AG04450 (cell line): ENCODE measurements at regions of chr18 and their contacts with region 1.

Region 1: DNA sequence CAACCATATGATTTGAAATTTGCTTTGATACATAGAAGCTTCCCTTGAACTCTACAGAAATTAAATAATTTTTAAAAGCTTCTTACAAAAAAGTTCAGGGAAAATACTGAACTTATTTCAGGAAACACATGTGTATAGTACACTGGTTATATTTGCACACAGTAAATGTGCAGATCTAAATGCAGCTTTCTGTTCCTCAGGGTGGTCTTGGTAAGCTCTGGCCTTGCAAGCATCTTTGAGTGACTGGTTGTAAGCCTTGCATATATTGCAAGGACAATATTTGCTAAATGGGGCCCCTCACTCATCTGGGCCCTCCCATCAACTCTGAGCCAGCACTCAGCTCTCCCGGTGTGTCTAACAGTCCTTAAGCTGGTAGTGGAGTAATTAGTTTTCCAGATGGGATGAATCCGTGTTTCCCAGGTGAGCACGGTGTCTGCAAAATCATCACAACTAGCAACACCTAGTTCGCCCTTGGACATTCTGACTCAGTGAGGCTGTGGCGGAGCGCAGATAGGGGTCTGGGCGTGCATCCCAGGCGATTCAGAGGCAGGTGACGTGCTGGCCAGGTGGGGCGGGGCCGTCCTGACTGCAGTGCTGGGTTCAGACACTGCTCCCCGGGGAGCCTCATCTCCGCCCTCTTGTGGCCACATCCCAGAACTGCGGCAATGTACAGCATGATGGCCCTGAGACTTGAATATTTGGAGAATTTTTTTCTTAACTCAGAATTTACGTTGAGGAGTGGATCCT is 149.6 kb downstream of the MBP start:
- DNase-seq: peak; percentile 32
- H3K4me3 ChIP-seq: no peak overlapping the region
- H3K27ac ChIP-seq: no peak overlapping the region
- H3K27me3 ChIP-seq: peaks cover 5% of the 10 kb centered on the region
- CTCF ChIP-seq: peak; percentile 93

Region 2: GRCh38 chr18:76643996-76644395 is 339.0 kb before region 1 on chr18:
- CTCF ChIA-PET with region 1: no interaction called
- POLR2A ChIA-PET with region 1: no interaction called
- DNase-seq: no peak
- H3K4me3 ChIP-seq: no peak overlapping the region
- H3K27ac ChIP-seq: no peak overlapping the region
- H3K27me3 ChIP-seq: peaks cover 14% of the 10 kb centered on the region
- CTCF ChIP-seq: no peak

Region 3: DNA sequence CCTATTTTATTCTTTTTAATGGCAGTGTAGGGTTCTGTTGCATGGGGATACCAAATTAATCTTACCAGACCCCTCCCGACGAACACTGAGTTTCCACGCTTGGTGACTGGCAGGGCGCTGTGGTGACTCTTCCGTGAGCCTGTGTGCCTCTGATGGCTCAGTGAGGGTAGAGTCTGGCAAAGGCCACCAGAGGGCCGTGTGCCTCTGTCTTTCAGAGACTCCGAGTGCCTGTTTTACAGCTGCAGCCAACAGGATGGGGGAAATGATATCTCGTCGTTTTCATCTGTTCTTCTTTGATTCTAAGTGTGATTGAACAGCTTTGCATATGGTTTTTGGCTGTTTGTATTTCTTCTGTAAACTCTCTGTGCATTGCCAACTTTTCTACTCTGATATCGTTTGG is 60.9 kb before region 1 on chr18:
- CTCF ChIA-PET with region 1: interaction called, 87 read pairs
- POLR2A ChIA-PET with region 1: no interaction called
- DNase-seq: peak; percentile 10
- H3K4me3 ChIP-seq: no peak overlapping the region
- H3K27ac ChIP-seq: no peak overlapping the region
- H3K27me3 ChIP-seq: no peaks in the 10 kb centered on the region
- CTCF ChIP-seq: peak; percentile 72

Region 4: DNA sequence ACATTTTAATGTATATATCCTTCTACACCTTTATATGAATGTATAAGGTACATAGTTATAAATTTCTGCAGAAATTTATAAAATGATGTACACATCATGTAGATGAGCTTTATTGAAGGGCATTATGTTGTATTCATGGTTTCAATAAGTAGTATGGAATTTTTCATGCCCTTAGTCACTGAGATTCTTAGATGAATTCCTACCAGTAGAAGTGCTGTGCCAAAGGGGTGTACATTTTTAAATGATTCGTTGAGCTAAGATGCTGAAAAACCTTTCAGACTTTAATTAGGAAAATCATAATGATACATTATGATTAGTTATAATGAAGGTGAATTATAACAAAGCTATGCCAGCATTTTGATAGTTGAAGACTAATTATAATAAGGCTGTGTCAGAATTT is 45.4 kb before region 1 on chr18:
- CTCF ChIA-PET with region 1: interaction called, 18 read pairs
- POLR2A ChIA-PET with region 1: no interaction called
- DNase-seq: no peak
- H3K4me3 ChIP-seq: no peak overlapping the region
- H3K27ac ChIP-seq: no peak overlapping the region
- H3K27me3 ChIP-seq: no peaks in the 10 kb centered on the region
- CTCF ChIP-seq: peak; percentile 46

Region 5: GRCh38 chr18:76963936-76964335 is 19.1 kb before region 1 on chr18:
- CTCF ChIA-PET with region 1: interaction called, 33 read pairs
- POLR2A ChIA-PET with region 1: no interaction called
- DNase-seq: no peak
- H3K4me3 ChIP-seq: no peak overlapping the region
- H3K27ac ChIP-seq: no peak overlapping the region
- H3K27me3 ChIP-seq: no peaks in the 10 kb centered on the region
- CTCF ChIP-seq: no peak

Region 6: GRCh38 chr18:77054606-77055428 is 71.8 kb after region 1 on chr18:
- CTCF ChIA-PET with region 1: interaction called, 15 read pairs
- POLR2A ChIA-PET with region 1: no interaction called
- DNase-seq: peak; percentile 71
- H3K4me3 ChIP-seq: no peak overlapping the region
- H3K27ac ChIP-seq: peak overlapping the region; percentile 70
- H3K27me3 ChIP-seq: no peaks in the 10 kb centered on the region
- CTCF ChIP-seq: peak; percentile 92

Region 7: GRCh38 chr18:77547757-77548156 is 564.7 kb after region 1 on chr18:
- CTCF ChIA-PET with region 1: no interaction called
- POLR2A ChIA-PET with region 1: no interaction called
- DNase-seq: no peak
- H3K4me3 ChIP-seq: no peak overlapping the region
- H3K27ac ChIP-seq: no peak overlapping the region
- H3K27me3 ChIP-seq: no peaks in the 10 kb centered on the region
- CTCF ChIP-seq: no peak